CD8-positive, alpha-beta T cell (primary cell): ENCODE measurements at regions of chr18 and their contacts with region 1.

Region 1: DNA sequence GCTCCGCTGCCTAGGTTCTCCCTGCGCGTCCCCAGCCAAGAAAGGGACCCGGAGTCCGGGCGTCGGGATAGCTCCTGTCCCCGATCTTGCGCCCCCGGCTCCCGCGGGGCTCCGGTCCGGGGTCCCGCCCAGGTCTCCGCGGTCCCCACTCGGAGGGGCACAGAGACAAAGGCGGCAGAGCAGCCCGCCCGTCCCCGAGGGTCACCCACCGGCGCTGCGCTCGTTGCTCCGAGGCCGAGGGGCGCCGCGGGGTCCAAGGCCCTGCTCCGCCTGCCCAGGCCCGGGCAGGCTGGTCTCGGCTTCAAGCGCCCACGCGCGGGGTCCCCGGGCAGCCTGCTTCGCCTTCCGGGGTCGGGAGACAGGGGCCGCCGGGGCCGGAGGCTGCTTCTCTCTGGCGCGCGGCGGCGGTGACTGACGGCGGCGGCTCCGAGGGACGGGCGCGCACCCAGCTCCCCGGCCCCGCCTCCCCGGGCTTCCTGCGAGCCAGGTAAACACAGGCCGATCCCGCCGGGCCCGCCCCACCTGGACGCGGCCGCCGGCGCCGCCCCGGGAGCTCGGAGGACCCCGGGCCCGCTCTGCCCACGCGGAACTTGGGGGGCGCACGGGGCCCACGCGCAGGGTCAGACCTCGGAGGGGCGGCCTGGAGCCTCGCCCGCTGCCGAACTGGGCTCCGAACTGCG is at the start of gene MBP:
- DNase-seq: peak; percentile 40 to 85 (median 75)
- ATAC-seq: peak; percentile 58
- H3K4me3 ChIP-seq: peak within 1 kb of the TSS; percentile 70 to 76
- H3K4me3 Mint-ChIP-seq: peak within 1 kb of the TSS; percentile 95
- H3K27ac ChIP-seq: peak within 1 kb of the TSS; percentile 69 to 80
- H3K27ac Mint-ChIP-seq: peak within 1 kb of the TSS; percentile 95
- H3K4me1 ChIP-seq: peaks cover 52% of the 10 kb centered on the region
- H3K4me1 Mint-ChIP-seq: peaks cover 57% of the 10 kb centered on the region
- H3K27me3 ChIP-seq: no peaks in the 10 kb centered on the region
- H3K27me3 Mint-ChIP-seq: no peaks in the 10 kb centered on the region
- CTCF ChIP-seq: no peak
- total RNA-seq, gene MBP: 67.9 to 70.7 TPM

Region 2: GRCh38 chr18:76492669-76493212 is 639.8 kb before region 1 on chr18:
- CTCF ChIA-PET with region 1: no interaction called
- POLR2A ChIA-PET with region 1: no interaction called
- intact Hi-C with region 1: loop called in 1 of 2 experiments (anchors 10 kb)
- DNase-seq: peak; percentile 93 to 100 (median 97)
- ATAC-seq: peak; percentile 69
- H3K4me3 ChIP-seq: peak overlapping the region; percentile 66 to 99
- H3K4me3 Mint-ChIP-seq: peak overlapping the region; percentile 92
- H3K27ac ChIP-seq: peak overlapping the region; percentile 46 to 66
- H3K27ac Mint-ChIP-seq: peak overlapping the region; percentile 87
- H3K4me1 ChIP-seq: peaks cover 19% of the 10 kb centered on the region
- H3K4me1 Mint-ChIP-seq: peaks cover 37% of the 10 kb centered on the region
- H3K27me3 ChIP-seq: peaks cover 0 to 9% of the 10 kb centered on the region in 2 experiments
- H3K27me3 Mint-ChIP-seq: peaks cover 28% of the 10 kb centered on the region
- CTCF ChIP-seq: no peak

Region 3: DNA sequence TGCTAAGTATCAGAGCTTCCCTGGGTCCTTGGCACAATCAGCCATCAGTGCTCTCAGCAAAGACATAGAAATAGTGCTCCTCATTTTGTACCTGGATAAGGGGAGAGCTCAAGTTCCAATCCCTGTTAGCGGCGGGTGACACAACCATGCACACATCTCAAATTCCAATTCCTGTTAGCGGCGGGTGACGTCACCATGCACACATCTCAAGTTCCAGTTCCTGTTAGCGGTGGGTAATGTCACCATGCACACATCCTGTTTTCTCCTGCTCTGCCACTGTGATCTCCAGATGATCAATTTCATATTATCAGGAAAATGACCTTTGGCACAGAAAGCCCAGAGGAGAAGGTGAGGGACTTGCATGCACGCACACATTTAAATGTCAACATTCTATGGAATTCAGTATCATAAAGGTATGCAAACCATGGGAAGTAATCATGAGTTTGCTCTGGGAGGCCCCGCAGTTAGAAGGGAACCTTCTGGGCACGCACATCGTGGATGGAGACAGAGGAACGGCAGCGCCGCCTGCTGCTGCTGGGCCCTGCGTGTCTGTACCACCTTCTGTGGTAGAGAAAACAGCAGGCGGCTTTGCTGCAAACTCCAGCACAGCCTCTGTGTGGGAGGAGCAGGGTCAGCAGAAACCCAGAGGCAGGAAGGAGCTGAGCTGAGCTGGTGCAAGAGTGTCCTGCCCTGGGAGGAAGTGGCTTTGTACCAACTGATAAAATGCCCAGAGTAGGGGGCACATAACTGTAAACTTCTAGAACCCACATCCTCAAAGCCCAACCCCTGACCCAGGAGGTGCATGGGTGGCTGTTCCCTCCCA is 77.7 kb before region 1 on chr18:
- CTCF ChIA-PET with region 1: interaction called, 4 read pairs
- POLR2A ChIA-PET with region 1: interaction called, 27 read pairs
- intact Hi-C with region 1: loop called in 1 of 2 experiments (anchors 2 kb)
- DNase-seq: peak; percentile 68 to 94 (median 86)
- ATAC-seq: peak; percentile 78
- H3K4me3 ChIP-seq: peak overlapping the region; percentile 35 to 44
- H3K4me3 Mint-ChIP-seq: peak overlapping the region; percentile 71
- H3K27ac ChIP-seq: peak overlapping the region; percentile 80 to 95
- H3K27ac Mint-ChIP-seq: peak overlapping the region; percentile 98
- H3K4me1 ChIP-seq: peaks cover 64% of the 10 kb centered on the region
- H3K4me1 Mint-ChIP-seq: peaks cover 69% of the 10 kb centered on the region
- H3K27me3 ChIP-seq: no peaks in the 10 kb centered on the region
- H3K27me3 Mint-ChIP-seq: no peaks in the 10 kb centered on the region
- CTCF ChIP-seq: peak; percentile 53

Region 4: DNA sequence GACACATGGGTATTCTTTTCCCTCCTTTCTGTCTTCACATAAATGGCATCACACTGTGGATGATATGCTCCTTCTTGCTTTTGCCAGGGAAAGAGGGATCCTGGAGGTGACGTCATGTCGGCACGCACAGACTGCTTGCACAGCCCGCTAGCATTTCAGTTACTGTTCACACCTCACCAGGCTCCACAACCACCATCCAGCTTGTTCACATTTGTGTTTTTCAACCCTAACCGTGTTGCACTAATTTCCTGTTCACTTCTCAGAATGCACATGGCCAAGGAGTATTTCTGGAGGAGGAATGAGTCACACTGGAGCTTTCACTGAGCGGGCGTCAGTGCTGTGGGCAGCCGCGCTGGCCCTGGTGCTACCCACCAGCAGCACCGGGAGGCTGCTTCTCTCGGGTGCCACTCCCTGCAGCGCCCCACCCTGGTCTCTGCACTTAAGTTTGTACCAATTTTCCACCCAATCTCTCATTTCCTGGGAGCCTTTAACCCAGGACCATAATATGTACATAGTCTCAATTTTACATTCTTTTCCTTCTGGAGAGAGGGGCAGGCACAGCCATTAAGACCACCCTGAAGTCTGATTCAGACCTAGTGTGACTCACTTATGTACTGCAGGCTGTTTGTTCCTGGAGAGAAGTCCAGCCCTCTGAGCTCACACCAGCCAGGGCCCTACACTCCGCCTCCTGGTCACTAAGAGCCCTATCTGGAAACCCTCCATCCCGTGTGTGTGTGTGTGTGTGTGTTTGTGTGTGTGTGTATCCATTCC is 65.0 kb before region 1 on chr18:
- CTCF ChIA-PET with region 1: interaction called, 9 read pairs
- POLR2A ChIA-PET with region 1: interaction called, 24 read pairs
- intact Hi-C with region 1: loop called (anchors 2 kb)
- DNase-seq: peak in 8 of 9 experiments; percentile 48 to 90 (median 74)
- ATAC-seq: peak; percentile 20
- H3K4me3 ChIP-seq: peak overlapping the region in 1 of 2 experiments; percentile 9
- H3K4me3 Mint-ChIP-seq: peak overlapping the region; percentile 66
- H3K27ac ChIP-seq: peak overlapping the region; percentile 58 to 87
- H3K27ac Mint-ChIP-seq: peak overlapping the region; percentile 97
- H3K4me1 ChIP-seq: peaks cover 99% of the 10 kb centered on the region
- H3K4me1 Mint-ChIP-seq: peaks cover 94% of the 10 kb centered on the region
- H3K27me3 ChIP-seq: no peaks in the 10 kb centered on the region
- H3K27me3 Mint-ChIP-seq: no peaks in the 10 kb centered on the region
- CTCF ChIP-seq: no peak

Region 5: GRCh38 chr18:77114415-77115191 is 17.9 kb before region 1 on chr18:
- CTCF ChIA-PET with region 1: interaction called, 3 read pairs
- POLR2A ChIA-PET with region 1: interaction called, 63 read pairs
- intact Hi-C with region 1: loop called in 1 of 2 experiments (anchors 2 kb)
- DNase-seq: peak in 6 of 9 experiments; percentile 48 to 79 (median 62)
- ATAC-seq: peak; percentile 51
- H3K4me3 ChIP-seq: no peak overlapping the region
- H3K4me3 Mint-ChIP-seq: peak overlapping the region; percentile 47
- H3K27ac ChIP-seq: peak overlapping the region in 1 of 2 experiments; percentile 80
- H3K27ac Mint-ChIP-seq: peak overlapping the region; percentile 83
- H3K4me1 ChIP-seq: peaks cover 74% of the 10 kb centered on the region
- H3K4me1 Mint-ChIP-seq: peaks cover 86% of the 10 kb centered on the region
- H3K27me3 ChIP-seq: no peaks in the 10 kb centered on the region
- H3K27me3 Mint-ChIP-seq: no peaks in the 10 kb centered on the region
- CTCF ChIP-seq: no peak

Region 6: DNA sequence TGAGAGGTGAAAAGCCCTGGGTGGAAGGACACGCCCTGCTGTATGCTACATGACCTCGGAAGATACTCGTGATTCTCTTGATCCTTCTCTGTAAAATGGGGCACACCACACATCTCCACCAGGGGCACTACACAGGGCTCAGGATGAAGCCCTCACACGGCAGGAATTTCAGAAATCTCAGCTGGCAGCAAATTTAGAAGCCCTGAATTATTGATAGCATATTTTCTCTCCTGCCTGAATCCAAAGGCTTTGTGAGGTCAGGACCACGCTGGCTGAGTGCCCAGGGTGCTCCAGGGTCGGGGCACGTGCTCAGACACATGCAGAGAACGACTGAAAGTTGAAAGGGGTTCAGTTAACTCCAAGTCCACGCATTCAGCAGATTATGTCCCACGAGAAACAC is 75.0 kb after region 1 on chr18:
- CTCF ChIA-PET with region 1: interaction called, 7 read pairs
- POLR2A ChIA-PET with region 1: interaction called, 3 read pairs
- intact Hi-C with region 1: loop called (anchors 5 kb)
- DNase-seq: peak; percentile 29 to 80 (median 58)
- ATAC-seq: peak; percentile 93
- H3K4me3 ChIP-seq: no peak overlapping the region
- H3K4me3 Mint-ChIP-seq: peak overlapping the region; percentile 62
- H3K27ac ChIP-seq: no peak overlapping the region
- H3K27ac Mint-ChIP-seq: peak overlapping the region; percentile 34
- H3K4me1 ChIP-seq: peaks cover 40% of the 10 kb centered on the region
- H3K4me1 Mint-ChIP-seq: peaks cover 46% of the 10 kb centered on the region
- H3K27me3 ChIP-seq: no peaks in the 10 kb centered on the region
- H3K27me3 Mint-ChIP-seq: peaks cover 2% of the 10 kb centered on the region
- CTCF ChIP-seq: peak; percentile 57